Activated CD4-positive, alpha-beta T cell treated with anti-CD3 and anti-CD28 coated beads for 36 hours (primary cell): ENCODE measurements at regions of chr14 and their contacts with region 1.

Region 1: DNA sequence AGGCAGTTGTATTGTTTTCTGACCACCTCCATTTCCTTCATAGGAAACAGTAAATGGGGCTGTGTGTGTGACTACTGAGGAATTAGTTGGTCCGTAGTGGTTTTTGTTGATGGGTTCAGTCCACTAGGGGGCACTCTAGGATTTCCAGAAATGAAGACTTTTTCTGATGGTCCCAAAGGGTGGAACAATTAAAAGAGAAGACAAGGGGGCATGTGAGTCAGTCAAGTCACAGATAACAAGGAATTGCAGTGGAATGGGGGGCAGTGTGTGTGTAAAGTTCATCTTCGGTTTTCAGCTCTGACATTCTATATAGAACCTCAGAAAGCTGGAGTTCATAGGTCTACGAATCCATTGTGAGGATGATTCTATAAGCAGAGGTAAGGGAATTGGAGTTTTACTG is 186.6 kb upstream of the OR4E1 start:
- DNase-seq: peak; percentile 54
- ATAC-seq: peak; percentile 39
- H3K4me3 Mint-ChIP-seq: peak overlapping the region; percentile 58
- H3K27ac Mint-ChIP-seq: peak overlapping the region; percentile 56
- H3K4me1 Mint-ChIP-seq: peaks cover 8% of the 10 kb centered on the region
- H3K27me3 Mint-ChIP-seq: peaks cover 2% of the 10 kb centered on the region

Region 2: GRCh38 chr14:21768116-21768874 is 91.9 kb before region 1 on chr14:
- CTCF ChIA-PET with region 1: no interaction called
- POLR2A ChIA-PET with region 1: no interaction called
- intact Hi-C with region 1: no loop called
- DNase-seq: peak; percentile 28
- ATAC-seq: peak; percentile 95
- H3K4me3 Mint-ChIP-seq: peak overlapping the region; percentile 65
- H3K27ac Mint-ChIP-seq: peak overlapping the region; percentile 55
- H3K4me1 Mint-ChIP-seq: peaks cover 9% of the 10 kb centered on the region
- H3K27me3 Mint-ChIP-seq: peaks cover 7% of the 10 kb centered on the region

Region 3: GRCh38 chr14:21780429-21781084 is 79.6 kb before region 1 on chr14:
- CTCF ChIA-PET with region 1: no interaction called
- POLR2A ChIA-PET with region 1: no interaction called
- intact Hi-C with region 1: no loop called
- DNase-seq: no peak
- ATAC-seq: no peak
- H3K4me3 Mint-ChIP-seq: no peak overlapping the region
- H3K27ac Mint-ChIP-seq: no peak overlapping the region
- H3K4me1 Mint-ChIP-seq: no peaks in the 10 kb centered on the region
- H3K27me3 Mint-ChIP-seq: peaks cover 15% of the 10 kb centered on the region

Region 4: GRCh38 chr14:21846227-21846885 is 13.8 kb before region 1 on chr14:
- CTCF ChIA-PET with region 1: interaction called, 77 read pairs
- POLR2A ChIA-PET with region 1: interaction called, 3 read pairs
- intact Hi-C with region 1: no loop called
- DNase-seq: peak; percentile 86
- ATAC-seq: peak; percentile 81
- H3K4me3 Mint-ChIP-seq: peak overlapping the region; percentile 84
- H3K27ac Mint-ChIP-seq: peak overlapping the region; percentile 87
- H3K4me1 Mint-ChIP-seq: peaks cover 12% of the 10 kb centered on the region
- H3K27me3 Mint-ChIP-seq: peaks cover 13% of the 10 kb centered on the region

Region 5: DNA sequence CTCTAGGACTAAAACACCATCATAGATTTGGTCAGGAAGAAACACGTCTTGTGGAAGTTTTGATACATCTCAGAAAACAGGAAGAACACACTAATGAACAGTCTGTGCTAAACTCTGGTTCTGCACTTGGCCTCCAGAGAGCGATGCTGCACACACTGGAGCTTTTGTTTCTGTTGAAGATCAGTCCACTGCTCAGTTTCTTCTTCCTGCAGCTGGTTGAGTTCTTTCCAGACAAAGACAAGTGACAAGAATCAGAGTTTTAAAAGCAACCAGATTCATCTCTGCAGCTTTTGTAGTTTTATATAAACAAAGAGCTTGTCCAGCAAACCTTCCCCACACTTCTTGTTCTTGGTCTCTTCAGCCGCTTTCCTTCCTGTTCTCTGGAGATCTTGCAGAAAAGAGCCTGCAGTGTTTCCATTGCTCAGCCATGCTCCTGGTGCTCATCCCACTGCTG is 42.5 kb after region 1 on chr14:
- CTCF ChIA-PET with region 1: interaction called, 11 read pairs
- POLR2A ChIA-PET with region 1: no interaction called
- intact Hi-C with region 1: no loop called
- DNase-seq: peak; percentile 68
- ATAC-seq: peak; percentile 95
- H3K4me3 Mint-ChIP-seq: peak overlapping the region; percentile 73
- H3K27ac Mint-ChIP-seq: peak overlapping the region; percentile 72
- H3K4me1 Mint-ChIP-seq: peaks cover 18% of the 10 kb centered on the region
- H3K27me3 Mint-ChIP-seq: no peaks in the 10 kb centered on the region